Prostate gland (tissue), 2 donors: ENCODE measurements at regions of chr22 and their contacts with region 1.

Region 1: DNA sequence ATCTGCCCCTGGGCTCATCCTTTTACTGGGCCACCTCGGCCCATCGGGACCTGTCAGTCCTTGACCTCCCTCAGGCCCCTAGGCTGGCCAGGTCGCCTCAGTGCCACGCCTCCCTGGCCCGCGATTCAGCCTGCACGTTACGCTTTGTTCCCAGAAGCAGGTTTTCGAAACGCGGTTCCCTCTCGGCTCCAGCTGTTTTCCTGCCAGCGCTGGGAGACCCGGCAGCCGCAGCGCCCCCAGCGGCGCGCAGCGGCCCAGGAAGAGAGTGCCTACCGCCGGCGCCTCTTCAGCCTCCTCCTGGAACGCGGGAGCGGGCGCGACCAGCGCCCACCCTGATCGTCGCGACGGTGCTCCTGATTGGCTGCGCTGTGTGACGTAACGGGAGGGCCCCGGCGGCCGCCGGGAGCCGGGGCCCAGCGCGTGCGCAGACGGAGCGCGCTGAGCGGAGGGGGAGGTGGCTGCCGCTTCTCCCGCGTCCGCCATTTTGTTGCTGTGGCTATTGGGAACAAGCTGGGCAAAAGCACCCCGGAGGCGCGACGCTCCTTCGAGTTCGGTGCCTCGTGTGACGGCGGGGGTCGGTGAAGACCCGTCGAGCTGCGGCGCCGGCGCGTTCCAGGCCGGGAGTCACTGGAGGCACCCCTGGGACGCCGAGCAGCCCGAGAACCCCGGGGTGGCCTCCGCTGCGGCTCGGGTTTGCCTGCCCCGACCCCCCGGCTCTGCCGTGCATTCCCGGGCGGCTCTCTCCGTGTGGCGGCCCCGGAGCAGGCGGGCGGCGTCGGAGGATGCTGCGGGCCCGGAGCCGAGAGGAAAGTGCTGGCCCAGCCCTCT is at the start of gene CRKL:
- DNase-seq: peak; percentile 97
- H3K4me3 ChIP-seq: peak within 1 kb of the TSS; percentile 90 to 93
- H3K27ac ChIP-seq: peak within 1 kb of the TSS; percentile 94 to 97
- H3K4me1 ChIP-seq: peaks cover 8% of the 10 kb centered on the region
- H3K27me3 ChIP-seq: no peaks in the 10 kb centered on the region
- CTCF ChIP-seq: peak; percentile 88 to 98 (median 94)
- POLR2A ChIP-seq: peak; percentile 99
- total RNA-seq, gene CRKL: 41.6 to 72.0 TPM

Region 2: GRCh38 chr22:20636075-20636812 is 281.0 kb before region 1 on chr22:
- intact Hi-C with region 1: no loop called
- DNase-seq: no peak
- H3K4me3 ChIP-seq: no peak overlapping the region
- H3K27ac ChIP-seq: no peak overlapping the region
- H3K4me1 ChIP-seq: no peaks in the 10 kb centered on the region
- H3K27me3 ChIP-seq: no peaks in the 10 kb centered on the region
- CTCF ChIP-seq: no peak
- POLR2A ChIP-seq: no peak

Region 3: GRCh38 chr22:20858615-20859416 is 58.4 kb before region 1 on chr22 and contains the starts of genes PI4KA and SNAP29:
- intact Hi-C with region 1: loop called (anchors 5 kb)
- DNase-seq: peak; percentile 98
- H3K4me3 ChIP-seq: peak within 1 kb of the TSS; percentile 87 to 95
- H3K27ac ChIP-seq: peak within 1 kb of the TSS; percentile 88 to 90
- H3K4me1 ChIP-seq: peaks cover 15% of the 10 kb centered on the region
- H3K27me3 ChIP-seq: no peaks in the 10 kb centered on the region
- CTCF ChIP-seq: peak in 2 of 4 experiments; percentile 51 to 54
- POLR2A ChIP-seq: peak; percentile 69
- total RNA-seq, gene PI4KA: 74.2 to 115 TPM
- total RNA-seq, gene SNAP29: 19.1 to 24.1 TPM

Region 4: GRCh38 chr22:20981787-20982562 is 64.8 kb after region 1 on chr22 and contains the start of gene LZTR1:
- intact Hi-C with region 1: loop called (anchors 2 kb)
- DNase-seq: peak; percentile 86
- H3K4me3 ChIP-seq: peak within 1 kb of the TSS; percentile 75 to 89
- H3K27ac ChIP-seq: peak within 1 kb of the TSS; percentile 86 to 88
- H3K4me1 ChIP-seq: peaks cover 13% of the 10 kb centered on the region
- H3K27me3 ChIP-seq: no peaks in the 10 kb centered on the region
- CTCF ChIP-seq: peak in 3 of 4 experiments; percentile 31 to 53 (median 46)
- POLR2A ChIP-seq: peak; percentile 86
- total RNA-seq, gene LZTR1: 41.5 to 48.9 TPM

Region 5: DNA sequence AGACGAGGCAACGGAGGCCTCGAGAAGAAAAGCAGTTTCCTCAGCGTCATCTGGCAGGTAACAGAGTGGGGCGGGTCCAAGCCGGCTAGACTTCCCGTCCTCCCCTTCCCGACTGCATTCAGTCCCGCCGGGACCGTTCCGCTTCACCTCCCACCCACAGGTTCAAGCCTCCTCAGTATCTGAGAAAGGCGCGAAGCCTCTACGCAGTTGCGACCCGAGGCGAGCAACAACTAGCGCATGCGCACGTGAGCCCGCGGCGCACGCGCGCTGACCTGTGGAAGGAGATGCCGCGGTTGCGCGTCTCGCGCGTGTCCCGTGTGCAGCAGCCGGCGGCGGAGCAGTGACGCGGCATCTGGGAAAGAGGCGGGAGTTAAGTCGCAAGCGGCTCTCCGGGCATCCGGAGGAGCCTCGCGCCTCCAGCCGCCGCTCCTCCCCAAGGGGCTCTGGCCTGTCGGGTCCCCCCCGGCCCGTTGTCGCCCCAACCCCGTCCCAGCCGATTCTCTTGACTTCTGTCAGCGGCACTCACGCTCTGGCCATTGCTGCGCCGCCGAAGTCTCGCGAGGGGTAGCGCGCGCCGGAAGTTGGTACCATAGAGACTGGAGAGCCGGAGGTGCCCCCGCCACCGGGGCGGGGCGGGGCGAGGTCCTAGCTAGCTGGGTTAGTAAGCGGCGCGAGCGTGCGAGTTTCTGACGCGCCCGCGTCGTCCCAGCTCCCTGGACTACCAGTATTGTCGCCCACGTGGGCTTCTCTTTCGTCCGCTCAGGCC is 84.5 kb after region 1 on chr22 and contains the start of gene THAP7:
- intact Hi-C with region 1: loop called (anchors 5 kb)
- DNase-seq: peak; percentile 95
- H3K4me3 ChIP-seq: peak within 1 kb of the TSS; percentile 57 to 66
- H3K27ac ChIP-seq: peak within 1 kb of the TSS; percentile 96 to 97
- H3K4me1 ChIP-seq: peaks cover 16% of the 10 kb centered on the region
- H3K27me3 ChIP-seq: no peaks in the 10 kb centered on the region
- CTCF ChIP-seq: no peak
- POLR2A ChIP-seq: peak; percentile 68
- total RNA-seq, gene THAP7: 77.7 to 83.1 TPM